Kidney (tissue), 22 donors: ENCODE measurements at regions of chr2 and their contacts with region 1.

Region 1: DNA sequence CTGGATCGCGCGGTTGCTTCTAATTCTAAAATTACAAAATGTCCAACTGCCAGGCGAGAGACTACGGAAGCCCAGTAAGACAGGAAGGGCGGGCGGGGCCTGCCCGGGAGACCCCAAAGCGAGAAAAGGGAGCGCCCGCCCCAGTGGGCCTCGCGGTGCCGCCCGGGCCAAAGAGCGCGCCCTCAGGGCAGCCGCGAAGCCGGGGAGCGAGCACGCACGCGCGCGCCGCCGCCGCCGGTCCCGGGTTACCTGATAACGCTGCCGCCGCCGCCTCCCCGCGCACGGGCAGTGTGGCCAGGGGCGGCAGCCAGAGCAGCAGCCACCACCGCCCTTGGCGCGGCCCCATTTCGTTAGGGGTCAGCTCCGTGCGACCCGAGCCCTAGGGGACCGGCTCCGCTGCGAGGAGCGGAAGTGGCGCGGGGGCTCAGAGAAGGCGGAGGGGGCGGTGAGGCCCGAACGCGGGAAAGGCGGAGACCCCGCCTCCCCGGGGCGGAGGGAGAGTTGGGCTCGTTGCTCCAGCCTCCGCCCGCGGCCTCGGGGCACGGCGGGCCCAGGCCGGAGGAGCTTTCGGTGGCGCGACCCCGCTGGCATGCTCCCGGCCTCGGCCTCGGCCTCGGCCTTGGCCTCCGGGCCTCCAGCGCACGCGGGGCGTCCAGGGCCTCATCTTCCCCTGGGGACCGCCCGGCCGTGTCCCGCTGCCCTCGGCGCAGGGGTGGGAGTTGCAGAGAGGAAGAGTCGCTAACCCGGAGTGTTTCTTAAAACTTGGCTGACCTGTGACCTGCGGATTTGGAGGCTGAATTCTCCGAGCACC is at the start of gene NEMP2:
- DNase-seq: peak; percentile 82 to 93 (median 88)
- H3K4me3 ChIP-seq: peak within 1 kb of the TSS; percentile 86 to 97 (median 87)
- H3K27ac ChIP-seq: peak within 1 kb of the TSS; percentile 84 to 89
- H3K4me1 ChIP-seq: no peaks in the 10 kb centered on the region
- H3K27me3 ChIP-seq: no peaks in the 10 kb centered on the region
- CTCF ChIP-seq: no peak
- total RNA-seq, gene NEMP2: 5.2 TPM

Region 2: DNA sequence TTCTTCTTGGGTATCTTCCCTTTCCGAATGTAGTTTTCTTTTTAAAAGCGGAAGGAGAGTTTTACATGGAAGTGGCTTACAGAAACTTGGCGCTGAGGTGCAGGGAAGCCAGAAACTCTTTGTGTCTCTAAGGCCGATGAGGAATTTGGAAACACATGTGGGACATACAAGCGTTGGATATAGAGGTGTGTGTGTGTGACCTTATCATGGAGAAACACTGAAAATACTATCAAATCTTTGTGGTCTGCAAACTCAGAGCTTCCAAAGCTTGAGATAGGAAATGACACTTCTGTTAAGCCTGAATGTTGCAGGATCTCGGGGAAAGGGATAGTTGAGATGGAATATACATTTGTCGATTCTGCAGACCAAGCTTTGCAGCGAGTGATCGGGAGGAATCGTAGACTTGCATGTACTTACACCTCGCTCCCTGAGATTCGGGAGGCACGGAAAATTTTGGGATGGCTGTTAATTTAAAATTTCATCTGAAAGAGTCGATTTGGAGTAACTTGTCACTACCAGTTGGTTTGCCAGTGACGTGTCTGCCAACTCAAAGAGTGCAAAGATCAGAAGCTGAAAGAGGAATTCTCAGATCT is 115.4 kb after region 1 on chr2:
- intact Hi-C with region 1: loop called (anchors 10 kb)
- DNase-seq: peak in 2 of 5 donors; percentile 61 to 77
- H3K4me3 ChIP-seq: peak overlapping the region; percentile 72 to 97 (median 83)
- H3K27ac ChIP-seq: peak overlapping the region; percentile 85 to 91
- H3K4me1 ChIP-seq: peaks cover 0 to 4% (median 0%) of the 10 kb centered on the region in 3 donors
- H3K27me3 ChIP-seq: no peaks in the 10 kb centered on the region
- CTCF ChIP-seq: no peak

Region 3: DNA sequence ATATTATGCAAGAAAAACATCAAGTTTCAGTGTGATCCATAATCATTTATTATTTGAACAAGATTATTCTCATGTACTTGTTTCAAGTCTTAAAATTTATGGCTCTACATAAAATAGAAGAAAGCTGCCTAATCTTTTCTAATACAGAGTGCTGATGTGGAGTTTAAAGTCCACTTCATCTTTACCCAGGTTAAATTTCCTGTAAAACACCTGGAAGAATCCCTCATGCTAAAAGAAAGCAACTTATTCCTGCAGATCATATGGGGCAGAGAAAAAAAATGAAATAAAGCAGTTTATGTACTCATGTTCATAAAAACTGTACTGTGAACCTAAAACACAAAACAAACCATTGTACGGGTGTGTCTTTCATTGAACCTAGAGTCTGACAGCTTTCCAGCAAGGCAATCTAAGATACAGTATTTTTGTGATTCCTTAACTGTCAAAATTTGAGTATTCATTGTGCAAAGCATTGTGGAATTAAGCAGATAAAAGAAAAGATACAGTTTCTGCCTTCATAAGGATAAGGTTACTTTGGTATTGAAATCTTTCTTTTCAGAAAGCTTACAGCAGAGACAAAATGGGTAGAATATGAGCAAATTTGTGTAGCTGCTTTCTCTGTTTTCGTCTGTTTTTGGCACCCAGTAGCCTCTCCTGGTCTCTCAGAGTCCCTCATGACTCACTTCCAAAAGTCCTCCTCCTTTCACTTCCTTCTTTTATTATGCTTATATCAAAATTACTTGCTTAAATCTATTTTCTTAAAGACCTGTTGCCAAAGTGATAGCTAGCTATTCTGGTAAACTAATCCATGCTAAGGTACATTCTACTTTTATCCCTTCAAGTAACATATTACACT is 319.2 kb after region 1 on chr2:
- intact Hi-C with region 1: no loop called
- DNase-seq: no peak
- H3K4me3 ChIP-seq: no peak overlapping the region
- H3K27ac ChIP-seq: no peak overlapping the region
- H3K4me1 ChIP-seq: no peaks in the 10 kb centered on the region
- H3K27me3 ChIP-seq: no peaks in the 10 kb centered on the region
- CTCF ChIP-seq: no peak

Region 4: GRCh38 chr2:190927301-190927700 is 392.8 kb after region 1 on chr2:
- intact Hi-C with region 1: no loop called
- DNase-seq: peak in 3 of 5 donors; percentile 24 to 76 (median 62)
- H3K4me3 ChIP-seq: peak overlapping the region in 2 of 3 donors; percentile 65 to 77
- H3K27ac ChIP-seq: peak overlapping the region; percentile 45 to 59
- H3K4me1 ChIP-seq: peaks cover 2 to 4% (median 3%) of the 10 kb centered on the region in 3 donors
- H3K27me3 ChIP-seq: no peaks in the 10 kb centered on the region
- CTCF ChIP-seq: no peak